ENCODE measurements at regions of chr3 and their contacts with region 1.

Region 1: GRCh38 chr3:39447637-39448483 is 19.6 kb upstream of the MOBP start:
- DNase-seq: peak; percentile 51 to 59 (median 55)
- H3K4me3 ChIP-seq: no peak overlapping the region
- H3K4me3 Mint-ChIP-seq: no peak overlapping the region
- H3K27ac ChIP-seq: no peak overlapping the region
- H3K27ac Mint-ChIP-seq: peak overlapping the region in 1 of 7 donors; percentile 37
- H3K4me1 ChIP-seq: no peaks in the 10 kb centered on the region
- H3K4me1 Mint-ChIP-seq: peaks cover 0 to 4% (median under 1%) of the 10 kb centered on the region in 4 donors
- H3K27me3 ChIP-seq: no peaks in the 10 kb centered on the region
- H3K27me3 Mint-ChIP-seq: peaks cover 2 to 3% of the 10 kb centered on the region in 2 donors

Region 2: GRCh38 chr3:39406368-39407258 is 41.2 kb before region 1 on chr3 and contains the start of gene RPSA:
- CTCF ChIA-PET with region 1: interaction called, 48 read pairs
- POLR2A ChIA-PET with region 1: interaction called, 4 read pairs
- intact Hi-C with region 1: loop called (anchors 1 kb)
- DNase-seq: peak; percentile 91 to 99 (median 99)
- H3K4me3 ChIP-seq: peak within 1 kb of the TSS; percentile 31 to 72
- H3K4me3 Mint-ChIP-seq: peak within 1 kb of the TSS; percentile 88 to 99 (median 96)
- H3K27ac ChIP-seq: peak within 1 kb of the TSS; percentile 81
- H3K27ac Mint-ChIP-seq: peak within 1 kb of the TSS; percentile 88 to 99 (median 98)
- H3K4me1 ChIP-seq: peaks cover 47% of the 10 kb centered on the region
- H3K4me1 Mint-ChIP-seq: peaks cover 30 to 54% (median 43%) of the 10 kb centered on the region in 4 donors
- H3K27me3 ChIP-seq: no peaks in the 10 kb centered on the region
- H3K27me3 Mint-ChIP-seq: no peaks in the 10 kb centered on the region
- total RNA-seq, gene RPSA: 1,582 to 1,688 TPM

Region 3: GRCh38 chr3:39414421-39414907 is 33.4 kb before region 1 on chr3:
- CTCF ChIA-PET with region 1: interaction called, 48 read pairs
- POLR2A ChIA-PET with region 1: no interaction called
- intact Hi-C with region 1: no loop called
- DNase-seq: no peak
- H3K4me3 ChIP-seq: no peak overlapping the region
- H3K4me3 Mint-ChIP-seq: peak overlapping the region in 1 of 8 donors; percentile 44
- H3K27ac ChIP-seq: no peak overlapping the region
- H3K27ac Mint-ChIP-seq: peak overlapping the region; percentile 53 to 81 (median 70)
- H3K4me1 ChIP-seq: peaks cover 17% of the 10 kb centered on the region
- H3K4me1 Mint-ChIP-seq: peaks cover 16 to 37% (median 25%) of the 10 kb centered on the region in 4 donors
- H3K27me3 ChIP-seq: no peaks in the 10 kb centered on the region
- H3K27me3 Mint-ChIP-seq: no peaks in the 10 kb centered on the region

Region 4: DNA sequence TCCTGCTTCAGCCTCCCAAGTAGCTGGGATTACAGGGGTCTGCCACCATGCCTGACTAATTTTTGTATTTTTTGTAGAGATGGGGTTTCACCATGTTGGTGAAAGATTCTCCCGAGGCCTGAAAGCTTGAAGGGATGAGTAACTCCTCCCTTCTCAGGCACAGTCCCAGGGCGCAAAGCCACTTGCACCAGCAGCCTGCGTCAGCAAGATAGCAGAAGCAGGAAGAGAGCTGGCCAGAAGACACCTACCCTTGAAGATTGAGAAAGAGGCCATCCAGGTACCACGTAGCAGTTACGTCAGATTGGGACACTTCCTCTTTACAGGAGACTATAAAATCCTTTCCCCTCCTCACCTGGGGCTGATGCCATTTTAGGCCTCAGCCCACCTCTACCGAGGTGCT is 11.2 kb after region 1 on chr3:
- CTCF ChIA-PET with region 1: interaction called, 11 read pairs
- POLR2A ChIA-PET with region 1: no interaction called
- intact Hi-C with region 1: no loop called
- DNase-seq: no peak
- H3K4me3 ChIP-seq: no peak overlapping the region
- H3K4me3 Mint-ChIP-seq: no peak overlapping the region
- H3K27ac ChIP-seq: no peak overlapping the region
- H3K27ac Mint-ChIP-seq: no peak overlapping the region
- H3K4me1 ChIP-seq: no peaks in the 10 kb centered on the region
- H3K4me1 Mint-ChIP-seq: no peaks in the 10 kb centered on the region
- H3K27me3 ChIP-seq: no peaks in the 10 kb centered on the region
- H3K27me3 Mint-ChIP-seq: peaks cover 12 to 25% of the 10 kb centered on the region in 2 donors

Region 5: GRCh38 chr3:40191850-40192448 is 744.1 kb after region 1 on chr3:
- CTCF ChIA-PET with region 1: no interaction called
- POLR2A ChIA-PET with region 1: no interaction called
- intact Hi-C with region 1: no loop called
- DNase-seq: peak in 4 of 5 donors; percentile 30 to 56 (median 40)
- H3K4me3 ChIP-seq: no peak overlapping the region
- H3K4me3 Mint-ChIP-seq: no peak overlapping the region
- H3K27ac ChIP-seq: no peak overlapping the region
- H3K27ac Mint-ChIP-seq: no peak overlapping the region
- H3K4me1 ChIP-seq: no peaks in the 10 kb centered on the region
- H3K4me1 Mint-ChIP-seq: peaks cover 0 to 2% (median 0%) of the 10 kb centered on the region in 4 donors
- H3K27me3 ChIP-seq: no peaks in the 10 kb centered on the region
- H3K27me3 Mint-ChIP-seq: no peaks in the 10 kb centered on the region

Measured in CD4-positive, alpha-beta memory T cell (primary cell).